ENCODE measurements at regions of chr7 and their contacts with region 1.

Region 1: GRCh38 chr7:149261829-149262617 is at the start of gene ZNF783:
- DNase-seq: peak; percentile 92
- CTCF ChIP-seq: peak; percentile 95

Region 2: DNA sequence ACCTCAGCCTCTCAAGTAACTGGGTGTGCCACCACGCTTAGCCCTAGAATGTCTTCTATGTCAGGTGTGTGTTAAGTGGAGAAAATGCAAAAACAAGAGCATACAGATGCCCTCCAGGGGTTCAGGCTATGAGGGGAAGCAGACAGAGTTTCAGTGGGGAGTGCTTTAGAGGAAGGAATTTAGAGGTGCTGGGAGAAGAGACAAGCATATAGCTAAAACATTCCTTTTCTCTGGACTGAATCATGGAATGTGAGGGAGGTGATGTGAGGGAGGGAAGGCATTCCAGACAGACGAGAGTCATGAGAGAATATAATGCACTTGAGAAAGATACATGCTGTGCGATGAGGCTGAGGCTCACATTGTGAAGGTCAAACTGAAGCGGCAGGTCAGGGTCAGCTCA is 164.9 kb before region 1 on chr7:
- CTCF ChIA-PET with region 1: no interaction called
- POLR2A ChIA-PET with region 1: no interaction called
- DNase-seq: no peak
- CTCF ChIP-seq: no peak

Region 3: GRCh38 chr7:149224352-149224751 is 37.7 kb before region 1 on chr7:
- CTCF ChIA-PET with region 1: no interaction called
- POLR2A ChIA-PET with region 1: no interaction called
- DNase-seq: no peak
- CTCF ChIP-seq: no peak

Region 4: GRCh38 chr7:149239345-149240191 is 22.5 kb before region 1 on chr7 and contains the start of gene ZNF212:
- CTCF ChIA-PET with region 1: interaction called, 18 read pairs
- POLR2A ChIA-PET with region 1: no interaction called
- DNase-seq: peak; percentile 97
- CTCF ChIP-seq: peak; percentile 97

Region 5: DNA sequence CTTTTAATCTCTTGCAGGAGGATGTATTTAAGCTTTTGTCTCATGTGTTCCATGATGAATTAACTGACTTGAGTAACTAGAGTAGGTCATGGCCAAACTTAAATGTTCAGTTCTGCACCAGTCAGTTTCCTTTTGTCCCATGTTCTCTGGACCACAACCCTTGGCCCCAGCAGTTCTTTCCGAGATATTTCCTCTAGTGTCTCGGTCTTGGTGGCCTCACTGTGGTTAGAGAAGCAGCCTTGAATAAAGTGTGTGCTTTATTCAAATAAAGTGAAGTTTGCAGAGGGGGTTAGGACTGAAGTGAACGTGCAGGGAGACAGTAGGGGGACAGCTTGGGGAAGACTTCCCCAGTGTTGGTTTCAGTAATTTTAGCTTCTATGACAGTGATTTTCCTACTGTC is 13.2 kb before region 1 on chr7:
- CTCF ChIA-PET with region 1: interaction called, 64 read pairs
- POLR2A ChIA-PET with region 1: interaction called, 14 read pairs
- DNase-seq: no peak
- CTCF ChIP-seq: no peak

Region 6: DNA sequence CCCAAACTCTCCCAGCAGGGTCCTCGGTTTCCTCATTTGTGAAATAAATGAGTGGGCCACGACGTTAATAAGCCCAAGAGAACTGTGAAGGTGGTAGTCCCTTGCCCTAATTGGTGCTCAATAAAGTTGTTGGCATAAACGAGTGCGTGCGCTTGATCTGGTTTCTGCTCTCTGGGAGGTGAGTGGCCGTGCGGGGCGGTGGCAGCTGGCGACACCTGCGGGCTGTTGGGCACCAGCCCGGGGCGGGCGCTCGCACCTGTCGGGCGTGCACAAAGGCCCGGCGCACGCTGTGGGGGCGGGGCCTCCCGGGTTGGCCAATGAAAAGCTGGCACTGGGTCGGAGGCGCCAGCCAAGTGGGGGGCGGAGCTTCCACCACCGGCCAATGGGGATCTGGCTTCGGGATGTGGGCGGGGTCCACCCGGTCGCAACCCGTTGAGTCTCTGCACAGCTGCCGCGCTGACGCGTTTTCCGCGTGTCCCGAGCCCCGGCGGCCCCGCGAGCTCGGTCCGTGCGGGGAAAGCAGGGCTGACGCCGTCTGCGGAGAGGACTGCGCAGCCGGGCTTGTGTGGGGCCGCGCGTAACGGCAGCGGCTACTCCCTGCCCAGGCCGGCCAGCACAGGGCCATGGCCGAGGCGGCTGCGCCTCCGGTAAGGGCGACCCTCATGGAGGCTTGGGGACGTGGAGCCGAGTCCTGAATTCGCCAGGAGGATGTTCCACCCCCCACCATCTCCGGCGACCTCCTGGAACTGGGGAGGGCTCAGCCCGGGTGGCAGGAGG is 23.0 kb after region 1 on chr7:
- CTCF ChIA-PET with region 1: interaction called, 36 read pairs
- POLR2A ChIA-PET with region 1: no interaction called
- DNase-seq: peak; percentile 99
- CTCF ChIP-seq: no peak

Region 7: GRCh38 chr7:149355390-149356048 is 93.5 kb after region 1 on chr7:
- CTCF ChIA-PET with region 1: no interaction called
- POLR2A ChIA-PET with region 1: no interaction called
- DNase-seq: no peak
- CTCF ChIP-seq: no peak

Measured in GM10248 (cell line).